Sigmoid colon (tissue), 7 donors: ENCODE measurements at regions of chr3 and their contacts with region 1.

Region 1: GRCh38 chr3:64030741-64031140 is 7.4 kb upstream of the PSMD6 start:
- DNase-seq: peak; percentile 82
- H3K4me3 ChIP-seq: peak overlapping the region in 3 of 4 donors; percentile 15 to 39 (median 33)
- H3K27ac ChIP-seq: peak overlapping the region in 2 of 4 donors; percentile 38 to 51
- H3K4me1 ChIP-seq: peaks cover 0 to 30% (median 12%) of the 10 kb centered on the region in 4 donors
- H3K27me3 ChIP-seq: no peaks in the 10 kb centered on the region
- CTCF ChIP-seq: peak; percentile 87 to 97 (median 88)
- EP300 ChIP-seq: no peak
- POLR2A ChIP-seq: no peak

Region 2: GRCh38 chr3:64143409-64144130 is 112.8 kb after region 1 on chr3:
- intact Hi-C with region 1: loop called (anchors 10 kb)
- DNase-seq: no peak
- H3K4me3 ChIP-seq: no peak overlapping the region
- H3K27ac ChIP-seq: peak overlapping the region; percentile 12 to 70 (median 56)
- H3K4me1 ChIP-seq: peaks cover 0 to 52% (median 44%) of the 10 kb centered on the region in 4 donors
- H3K27me3 ChIP-seq: no peaks in the 10 kb centered on the region
- CTCF ChIP-seq: no peak
- EP300 ChIP-seq: no peak
- POLR2A ChIP-seq: no peak

Region 3: GRCh38 chr3:64176461-64176996 is 145.8 kb after region 1 on chr3:
- intact Hi-C with region 1: no loop called
- DNase-seq: no peak
- H3K4me3 ChIP-seq: no peak overlapping the region
- H3K27ac ChIP-seq: no peak overlapping the region
- H3K4me1 ChIP-seq: peaks cover 0 to 3% (median 0%) of the 10 kb centered on the region in 4 donors
- H3K27me3 ChIP-seq: no peaks in the 10 kb centered on the region
- CTCF ChIP-seq: no peak
- EP300 ChIP-seq: no peak
- POLR2A ChIP-seq: no peak

Region 4: GRCh38 chr3:64484289-64484992 is 453.7 kb after region 1 on chr3:
- intact Hi-C with region 1: loop called (anchors 1 kb)
- DNase-seq: peak; percentile 87
- H3K4me3 ChIP-seq: no peak overlapping the region
- H3K27ac ChIP-seq: no peak overlapping the region
- H3K4me1 ChIP-seq: peaks cover 0 to 9% (median 3%) of the 10 kb centered on the region in 4 donors
- H3K27me3 ChIP-seq: no peaks in the 10 kb centered on the region
- CTCF ChIP-seq: peak; percentile 80 to 90 (median 84)
- EP300 ChIP-seq: no peak
- POLR2A ChIP-seq: no peak

Region 5: GRCh38 chr3:64806668-64807605 is 776.2 kb after region 1 on chr3:
- intact Hi-C with region 1: no loop called
- DNase-seq: no peak
- H3K4me3 ChIP-seq: no peak overlapping the region
- H3K27ac ChIP-seq: no peak overlapping the region
- H3K4me1 ChIP-seq: peaks cover 0 to 8% (median 5%) of the 10 kb centered on the region in 4 donors
- H3K27me3 ChIP-seq: no peaks in the 10 kb centered on the region
- CTCF ChIP-seq: no peak
- EP300 ChIP-seq: no peak
- POLR2A ChIP-seq: no peak